ENCODE measurements at regions of chr1 and their contacts with region 1.

Region 1: GRCh38 chr1:10209905-10210810 is at the start of gene KIF1B:
- DNase-seq: peak; percentile 97
- H3K4me3 Mint-ChIP-seq: peak within 1 kb of the TSS; percentile 88
- H3K27ac Mint-ChIP-seq: peak within 1 kb of the TSS; percentile 44
- H3K4me1 Mint-ChIP-seq: peaks cover 35% of the 10 kb centered on the region
- H3K27me3 Mint-ChIP-seq: no peaks in the 10 kb centered on the region
- total RNA-seq, gene KIF1B: 22.5 to 22.7 TPM

Region 2: GRCh38 chr1:10143961-10144485 is 66.1 kb before region 1 on chr1:
- CTCF ChIA-PET with region 1: no interaction called
- POLR2A ChIA-PET with region 1: no interaction called
- DNase-seq: no peak
- H3K4me3 Mint-ChIP-seq: no peak overlapping the region
- H3K27ac Mint-ChIP-seq: no peak overlapping the region
- H3K4me1 Mint-ChIP-seq: no peaks in the 10 kb centered on the region
- H3K27me3 Mint-ChIP-seq: no peaks in the 10 kb centered on the region

Region 3: GRCh38 chr1:10155087-10155712 is 55.0 kb before region 1 on chr1:
- CTCF ChIA-PET with region 1: interaction called, 10 read pairs
- POLR2A ChIA-PET with region 1: no interaction called
- DNase-seq: no peak
- H3K4me3 Mint-ChIP-seq: no peak overlapping the region
- H3K27ac Mint-ChIP-seq: no peak overlapping the region
- H3K4me1 Mint-ChIP-seq: no peaks in the 10 kb centered on the region
- H3K27me3 Mint-ChIP-seq: no peaks in the 10 kb centered on the region

Region 4: GRCh38 chr1:10189659-10190058 is 20.5 kb before region 1 on chr1:
- CTCF ChIA-PET with region 1: interaction called, 10 read pairs
- POLR2A ChIA-PET with region 1: no interaction called
- DNase-seq: no peak
- H3K4me3 Mint-ChIP-seq: no peak overlapping the region
- H3K27ac Mint-ChIP-seq: no peak overlapping the region
- H3K4me1 Mint-ChIP-seq: peaks cover 4% of the 10 kb centered on the region
- H3K27me3 Mint-ChIP-seq: peaks cover 4% of the 10 kb centered on the region

Region 5: GRCh38 chr1:10253755-10254154 is 43.6 kb after region 1 on chr1:
- CTCF ChIA-PET with region 1: interaction called, 26 read pairs
- POLR2A ChIA-PET with region 1: no interaction called
- DNase-seq: peak; percentile 17
- H3K4me3 Mint-ChIP-seq: no peak overlapping the region
- H3K27ac Mint-ChIP-seq: no peak overlapping the region
- H3K4me1 Mint-ChIP-seq: peaks cover 30% of the 10 kb centered on the region
- H3K27me3 Mint-ChIP-seq: no peaks in the 10 kb centered on the region

Region 6: GRCh38 chr1:10324627-10325026 is 114.5 kb after region 1 on chr1:
- CTCF ChIA-PET with region 1: interaction called, 13 read pairs
- POLR2A ChIA-PET with region 1: interaction called, 3 read pairs
- DNase-seq: peak; percentile 44
- H3K4me3 Mint-ChIP-seq: peak overlapping the region; percentile 66
- H3K27ac Mint-ChIP-seq: peak overlapping the region; percentile 80
- H3K4me1 Mint-ChIP-seq: peaks cover 27% of the 10 kb centered on the region
- H3K27me3 Mint-ChIP-seq: no peaks in the 10 kb centered on the region

Region 7: DNA sequence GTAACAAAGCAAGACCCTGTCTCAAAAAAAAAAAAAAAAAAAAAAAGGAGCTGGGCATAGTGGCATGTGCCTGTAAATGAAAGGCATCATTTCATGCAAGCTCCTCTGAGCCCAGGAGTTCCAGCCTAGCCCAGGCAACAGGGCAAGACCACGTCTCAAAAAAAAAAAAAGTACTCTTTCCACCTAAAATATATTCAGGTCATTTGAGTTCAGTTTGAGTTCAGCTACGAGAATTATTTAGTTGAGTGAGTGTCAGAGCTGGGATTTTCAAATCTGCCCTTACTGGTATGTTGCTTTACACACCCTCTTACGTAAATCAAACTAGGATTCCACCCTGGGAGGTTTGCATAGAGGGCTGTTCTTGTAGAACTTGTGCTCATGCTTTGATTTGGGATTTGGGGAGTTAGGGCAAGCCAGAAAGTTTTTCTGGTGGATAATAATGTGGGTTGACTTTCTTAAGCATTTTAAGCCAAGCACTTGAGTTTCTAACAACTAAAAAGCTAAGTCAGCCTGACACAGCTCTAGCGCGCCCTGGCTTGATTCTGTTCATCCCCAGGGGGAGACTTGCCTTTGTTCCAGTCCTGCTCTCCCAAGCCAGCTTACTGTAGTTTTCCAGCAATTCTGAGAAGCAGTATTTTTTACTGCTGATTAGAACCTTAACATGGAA is 177.4 kb after region 1 on chr1:
- CTCF ChIA-PET with region 1: no interaction called
- POLR2A ChIA-PET with region 1: no interaction called
- DNase-seq: no peak
- H3K4me3 Mint-ChIP-seq: no peak overlapping the region
- H3K27ac Mint-ChIP-seq: no peak overlapping the region
- H3K4me1 Mint-ChIP-seq: no peaks in the 10 kb centered on the region
- H3K27me3 Mint-ChIP-seq: no peaks in the 10 kb centered on the region

Region 8: GRCh38 chr1:10398734-10399623 is 188.8 kb after region 1 on chr1 and contains the start of gene PGD:
- CTCF ChIA-PET with region 1: interaction called, 21 read pairs
- POLR2A ChIA-PET with region 1: interaction called, 3 read pairs
- DNase-seq: peak; percentile 98
- H3K4me3 Mint-ChIP-seq: peak within 1 kb of the TSS; percentile 89
- H3K27ac Mint-ChIP-seq: peak within 1 kb of the TSS; percentile 67
- H3K4me1 Mint-ChIP-seq: peaks cover 44% of the 10 kb centered on the region
- H3K27me3 Mint-ChIP-seq: no peaks in the 10 kb centered on the region
- total RNA-seq, gene PGD: 80.8 to 84.3 TPM

Region 9: GRCh38 chr1:10835423-10836421 is 625.6 kb after region 1 on chr1:
- CTCF ChIA-PET with region 1: no interaction called
- POLR2A ChIA-PET with region 1: no interaction called
- DNase-seq: no peak
- H3K4me3 Mint-ChIP-seq: no peak overlapping the region
- H3K27ac Mint-ChIP-seq: no peak overlapping the region
- H3K4me1 Mint-ChIP-seq: peaks cover 9% of the 10 kb centered on the region
- H3K27me3 Mint-ChIP-seq: peaks cover 33% of the 10 kb centered on the region

Measured in activated CD4-positive, alpha-beta memory T cell treated with anti-CD3 and anti-CD28 coated beads, Interleukin-2, amount 10 ng/mL, durations not matched to agents 7 days and 5 days (primary cell).